ENCODE measurements at regions of chr1 and their contacts with region 1.

Region 1: DNA sequence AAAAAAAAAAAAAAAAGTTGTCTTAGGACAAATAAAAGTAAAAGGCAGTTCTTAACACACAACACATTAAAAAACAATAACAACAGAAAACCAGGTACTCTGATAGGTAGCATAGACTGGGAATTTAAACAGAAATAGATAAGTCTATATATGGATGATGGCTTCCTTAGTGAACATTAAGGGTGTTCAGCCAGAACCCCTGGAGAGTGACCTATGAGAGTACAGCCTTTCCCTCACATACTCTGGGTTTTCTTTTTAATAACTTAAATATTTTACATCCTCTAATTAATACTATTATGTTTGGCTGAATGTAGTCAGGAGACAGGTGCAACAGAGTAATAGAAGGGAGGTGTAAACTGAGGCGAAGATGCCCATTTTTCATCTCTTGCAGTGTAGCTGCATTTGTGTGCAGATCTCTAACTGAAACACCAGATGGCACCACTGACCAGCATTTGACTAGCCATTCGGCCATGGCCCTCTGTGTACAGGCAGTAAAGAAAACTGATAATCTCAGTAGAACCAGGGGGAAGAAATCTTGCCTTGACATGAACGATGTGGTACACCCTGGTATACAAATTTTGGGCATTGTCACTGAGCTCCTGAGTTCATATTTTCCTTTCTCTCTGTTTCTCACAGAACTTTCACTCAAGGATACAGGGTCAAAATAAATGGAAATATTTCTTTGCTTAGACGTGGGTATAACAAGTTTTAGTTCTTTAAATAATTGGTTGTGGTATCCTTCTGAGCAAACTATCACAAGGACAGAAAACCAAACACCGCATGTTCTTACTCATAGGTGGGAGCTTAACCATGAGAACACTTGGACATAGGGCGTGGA is 7.6 kb downstream of the TTF2 start:
- DNase-seq: peak in 1 of 2 donors; percentile 31
- ATAC-seq: peak; percentile 87

Region 2: GRCh38 chr1:117128323-117129079 is 60.7 kb after region 1 on chr1:
- intact Hi-C with region 1: loop called in 1 of 2 experiments (anchors 2 kb)
- DNase-seq: no peak
- ATAC-seq: no peak

Region 3: DNA sequence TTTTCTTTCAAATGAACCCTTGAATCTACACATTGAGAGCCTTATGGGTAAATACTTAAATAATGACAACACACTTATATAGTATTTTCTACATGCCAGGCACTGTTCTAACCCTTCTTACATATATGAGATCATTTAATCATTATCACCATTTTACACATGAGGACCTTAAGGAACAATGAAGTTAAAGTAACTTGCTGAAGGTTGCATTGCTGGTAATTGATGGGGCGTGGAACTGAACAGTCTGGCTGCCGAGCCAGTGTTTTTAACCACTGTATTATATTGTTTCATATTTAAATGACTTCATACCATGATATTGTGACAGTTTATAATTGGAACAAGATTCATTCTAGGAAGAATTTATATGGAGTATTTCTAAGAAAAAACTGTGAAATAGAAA is 426.2 kb after region 1 on chr1:
- intact Hi-C with region 1: loop called in 1 of 2 experiments (anchors 5 kb)
- DNase-seq: no peak
- ATAC-seq: no peak